Ascending aorta (tissue), 2 donors: ENCODE measurements at regions of chr14 and their contacts with region 1.

Region 1: GRCh38 chr14:22986508-22987054 is 4.2 kb upstream of the AJUBA start:
- DNase-seq: peak; percentile 55 to 94
- H3K4me3 ChIP-seq: no peak overlapping the region
- H3K27ac ChIP-seq: no peak overlapping the region
- H3K4me1 ChIP-seq: peaks cover 0 to 2% of the 10 kb centered on the region in 2 donors
- H3K27me3 ChIP-seq: no peaks in the 10 kb centered on the region
- CTCF ChIP-seq: peak; percentile 85 to 88 (median 85)

Region 2: GRCh38 chr14:22836301-22837113 is 150.1 kb before region 1 on chr14 and contains the start of gene MMP14:
- intact Hi-C with region 1: loop called (anchors 5 kb)
- DNase-seq: peak; percentile 67 to 94
- H3K4me3 ChIP-seq: peak within 1 kb of the TSS; percentile 68 to 86
- H3K27ac ChIP-seq: peak within 1 kb of the TSS; percentile 91 to 94
- H3K4me1 ChIP-seq: peaks cover 0 to 20% of the 10 kb centered on the region in 2 donors
- H3K27me3 ChIP-seq: no peaks in the 10 kb centered on the region
- CTCF ChIP-seq: peak in 2 of 3 experiments; percentile 51 to 85
- total RNA-seq, gene MMP14: 178 TPM

Region 3: GRCh38 chr14:22955702-22956569 is 30.6 kb before region 1 on chr14:
- intact Hi-C with region 1: loop called (anchors 2 kb)
- DNase-seq: no peak
- H3K4me3 ChIP-seq: peak overlapping the region; percentile 78 to 84
- H3K27ac ChIP-seq: peak overlapping the region; percentile 94 to 95
- H3K4me1 ChIP-seq: peaks cover 5 to 9% of the 10 kb centered on the region in 2 donors
- H3K27me3 ChIP-seq: no peaks in the 10 kb centered on the region
- CTCF ChIP-seq: no peak

Region 4: GRCh38 chr14:23006544-23007419 is 20.2 kb after region 1 on chr14:
- intact Hi-C with region 1: loop called (anchors 2 kb)
- DNase-seq: peak; percentile 87 to 98
- H3K4me3 ChIP-seq: peak overlapping the region; percentile 82 to 83
- H3K27ac ChIP-seq: peak overlapping the region; percentile 85 to 88
- H3K4me1 ChIP-seq: peaks cover 3 to 9% of the 10 kb centered on the region in 2 donors
- H3K27me3 ChIP-seq: no peaks in the 10 kb centered on the region
- CTCF ChIP-seq: peak in 1 of 3 experiments; percentile 24

Region 5: GRCh38 chr14:23057757-23058653 is 71.4 kb after region 1 on chr14:
- intact Hi-C with region 1: loop called (anchors 1 kb)
- DNase-seq: peak; percentile 28 to 86
- H3K4me3 ChIP-seq: peak overlapping the region; percentile 60 to 95
- H3K27ac ChIP-seq: peak overlapping the region in 1 of 2 donors; percentile 73
- H3K4me1 ChIP-seq: peaks cover 3 to 23% of the 10 kb centered on the region in 2 donors
- H3K27me3 ChIP-seq: no peaks in the 10 kb centered on the region
- CTCF ChIP-seq: peak; percentile 87 to 96 (median 92)

Region 6: DNA sequence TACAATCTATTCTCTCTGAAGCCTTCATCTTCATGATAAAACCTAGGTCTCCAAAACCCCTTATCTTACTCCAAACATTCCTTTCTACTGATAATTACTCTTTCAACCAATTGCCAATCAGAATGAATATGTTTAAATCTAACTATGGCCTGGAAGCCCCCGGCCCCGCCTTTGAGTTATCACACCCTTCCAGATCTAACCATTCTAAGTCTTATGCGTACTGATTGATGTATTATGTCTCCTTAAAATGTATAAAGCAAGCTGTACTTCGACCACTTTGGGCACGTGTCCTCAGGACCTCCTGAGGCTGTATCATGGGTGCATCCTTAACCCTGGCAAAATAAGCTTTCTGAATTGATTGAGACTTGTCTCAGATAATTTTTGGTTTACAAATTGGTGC is 349.0 kb after region 1 on chr14:
- intact Hi-C with region 1: no loop called
- DNase-seq: no peak
- H3K4me3 ChIP-seq: no peak overlapping the region
- H3K27ac ChIP-seq: no peak overlapping the region
- H3K4me1 ChIP-seq: no peaks in the 10 kb centered on the region
- H3K27me3 ChIP-seq: no peaks in the 10 kb centered on the region
- CTCF ChIP-seq: no peak